Mammary epithelial cell (primary cell): ENCODE measurements at regions of chr14 and their contacts with region 1.

Region 1: GRCh38 chr14:37172024-37172869 is at the start of gene SLC25A21:
- DNase-seq: peak; percentile 85
- H3K4me3 ChIP-seq: peak within 1 kb of the TSS; percentile 55 to 72 (median 67)
- H3K27ac ChIP-seq: peak within 1 kb of the TSS; percentile 76
- H3K4me1 ChIP-seq: no peaks in the 10 kb centered on the region
- H3K27me3 ChIP-seq: no peaks in the 10 kb centered on the region
- CTCF ChIP-seq: peak in 1 of 2 donors; percentile 6
- total RNA-seq, gene SLC25A21: 0.99 to 1.3 TPM

Region 2: DNA sequence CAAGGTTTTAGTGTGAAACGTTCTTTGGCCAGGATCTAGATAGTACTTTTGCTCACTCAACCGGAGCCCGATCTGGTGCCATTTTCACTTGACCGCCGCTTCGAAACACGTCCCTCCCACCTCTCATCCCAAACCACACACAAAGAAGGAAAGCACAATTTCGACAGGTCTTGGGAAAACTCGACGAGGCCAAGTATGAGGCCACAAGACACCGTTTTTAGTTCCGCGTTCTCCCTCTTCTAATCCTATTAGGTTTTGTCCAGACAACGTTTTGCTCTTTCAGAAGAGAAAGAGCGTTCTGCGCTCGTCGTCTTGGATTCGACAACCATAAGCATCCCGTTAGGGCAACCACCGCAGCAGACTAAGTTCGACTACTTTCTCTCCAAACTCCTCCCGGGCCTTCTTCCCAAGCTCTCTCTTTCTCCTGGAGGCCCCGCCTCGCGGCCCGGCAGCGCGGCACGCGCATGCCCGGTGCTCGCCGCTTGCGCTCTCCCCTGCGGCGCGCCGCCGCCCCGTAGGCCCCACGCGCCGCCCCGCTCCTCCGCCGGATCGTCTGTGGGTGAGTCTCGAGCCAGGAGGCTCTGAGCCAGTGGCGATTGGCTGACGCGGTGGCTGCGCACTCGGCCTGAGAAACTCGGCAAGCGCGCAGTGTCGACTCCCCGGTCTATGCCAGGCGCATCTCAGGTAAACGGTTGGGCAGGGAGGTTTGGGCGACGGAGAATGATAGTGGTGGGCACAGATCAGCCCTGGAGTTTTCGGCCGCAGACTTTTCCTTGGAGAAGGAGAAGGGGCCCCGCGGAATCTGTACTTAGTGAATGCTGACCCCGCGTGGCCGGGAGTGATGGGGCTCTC is 25.4 kb after region 1 on chr14 and contains the start of gene MIPOL1:
- CTCF ChIA-PET with region 1: no interaction called
- dilution Hi-C with region 1: no loop called
- in situ Hi-C with region 1: no loop called
- intact Hi-C with region 1: loop called (anchors 1 kb)
- DNase-seq: peak; percentile 89
- H3K4me3 ChIP-seq: peak within 1 kb of the TSS; percentile 70 to 92 (median 79)
- H3K27ac ChIP-seq: peak within 1 kb of the TSS; percentile 80
- H3K4me1 ChIP-seq: peaks cover 12% of the 10 kb centered on the region
- H3K27me3 ChIP-seq: no peaks in the 10 kb centered on the region
- CTCF ChIP-seq: no peak
- total RNA-seq, gene MIPOL1: 11.2 to 15.7 TPM

Region 3: GRCh38 chr14:37223947-37224474 is 51.8 kb after region 1 on chr14:
- CTCF ChIA-PET with region 1: no interaction called
- dilution Hi-C with region 1: no loop called
- in situ Hi-C with region 1: no loop called
- intact Hi-C with region 1: loop called (anchors 5 kb)
- DNase-seq: peak; percentile 74
- H3K4me3 ChIP-seq: no peak overlapping the region
- H3K27ac ChIP-seq: no peak overlapping the region
- H3K4me1 ChIP-seq: no peaks in the 10 kb centered on the region
- H3K27me3 ChIP-seq: no peaks in the 10 kb centered on the region
- CTCF ChIP-seq: no peak

Region 4: GRCh38 chr14:37278636-37279538 is 106.6 kb after region 1 on chr14:
- CTCF ChIA-PET with region 1: no interaction called
- dilution Hi-C with region 1: no loop called
- in situ Hi-C with region 1: no loop called
- intact Hi-C with region 1: no loop called
- DNase-seq: no peak
- H3K4me3 ChIP-seq: no peak overlapping the region
- H3K27ac ChIP-seq: no peak overlapping the region
- H3K4me1 ChIP-seq: no peaks in the 10 kb centered on the region
- H3K27me3 ChIP-seq: no peaks in the 10 kb centered on the region
- CTCF ChIP-seq: no peak